ENCODE measurements at regions of chr6 and their contacts with region 1.

Region 1: GRCh38 chr6:109304284-109305015 is 77.8 kb downstream of the CD164 start:
- DNase-seq: peak; percentile 81 to 96 (median 86)
- ATAC-seq: peak; percentile 86
- H3K4me3 ChIP-seq: no peak overlapping the region
- H3K27ac ChIP-seq: peak overlapping the region; percentile 90
- H3K4me1 ChIP-seq: peaks cover 50 to 90% of the 10 kb centered on the region in 2 experiments
- H3K27me3 ChIP-seq: no peaks in the 10 kb centered on the region
- CTCF ChIP-seq: 0 out of 6 replicates have a peak, but pooled peaks of 1 of the 3 experiments have one; percentile 9
- EP300 ChIP-seq: peak; percentile 100
- POLR2A ChIP-seq: peak; percentile 43; the same call in 1 of the 2 replicates
- RAD21 ChIP-seq: peak; percentile 36 to 56; a peak in 3 of 4 replicates

Region 2: DNA sequence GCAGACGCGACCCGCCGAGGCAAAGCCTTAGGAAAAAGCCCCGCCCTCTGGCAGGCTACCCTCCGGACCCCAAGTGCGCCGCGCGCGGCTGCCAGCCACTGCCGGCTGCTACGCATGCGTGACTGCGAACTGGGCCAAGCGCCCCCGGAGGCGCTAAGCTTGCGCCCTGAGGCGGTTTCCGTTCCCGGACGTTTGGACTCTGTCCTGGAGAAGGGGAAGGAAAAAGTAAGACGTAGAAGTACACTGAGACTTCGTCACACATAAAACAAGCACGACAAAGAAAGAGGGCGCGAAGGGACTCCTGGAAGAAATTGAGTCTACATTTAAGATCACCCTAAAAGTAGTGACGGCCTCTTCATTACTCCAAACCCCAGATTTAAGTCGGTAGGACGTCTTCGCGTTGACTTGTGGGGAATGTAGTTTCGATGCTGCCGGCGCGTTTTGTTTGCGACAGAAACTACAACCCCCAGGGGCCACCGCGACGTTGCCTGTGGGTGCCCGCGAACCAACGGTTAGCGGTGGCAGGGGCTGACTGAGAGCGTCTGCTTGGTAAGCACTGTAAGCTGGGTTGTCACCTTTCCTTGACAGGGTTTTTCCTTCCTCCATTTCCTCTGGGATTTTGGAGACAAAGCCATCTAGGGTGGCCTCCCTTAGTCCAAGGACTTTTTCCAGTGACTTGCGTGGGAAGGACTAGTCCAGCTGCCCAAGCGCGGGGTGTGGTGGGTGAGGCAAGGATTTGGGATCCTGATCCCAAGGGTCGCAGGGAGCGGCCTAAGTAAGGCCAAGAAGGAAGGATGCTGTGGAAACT is 209.2 kb before region 1 on chr6 and contains the start of gene CEP57L1:
- CTCF ChIA-PET with region 1: no interaction called
- POLR2A ChIA-PET with region 1: no interaction called
- in situ Hi-C with region 1: no loop called
- intact Hi-C with region 1: loop called (anchors 5 kb)
- DNase-seq: peak; percentile 73 to 98 (median 94)
- ATAC-seq: peak; percentile 85
- H3K4me3 ChIP-seq: peak within 1 kb of the TSS; percentile 84
- H3K27ac ChIP-seq: peak within 1 kb of the TSS; percentile 94
- H3K4me1 ChIP-seq: peaks cover 0 to 10% of the 10 kb centered on the region in 2 experiments; a peak in 2 of 5 replicates
- H3K27me3 ChIP-seq: no peaks in the 10 kb centered on the region
- CTCF ChIP-seq: peak; percentile 31 to 46 (median 38); a peak in 5 of 6 replicates
- EP300 ChIP-seq: no peak; the same call in none of the 2 replicates
- POLR2A ChIP-seq: peak; percentile 80
- RAD21 ChIP-seq: no peak
- polyA plus RNA-seq, gene CEP57L1: 70.0 to 88.6 TPM

Region 3: GRCh38 chr6:109236115-109237076 is 68.1 kb before region 1 on chr6:
- CTCF ChIA-PET with region 1: no interaction called
- POLR2A ChIA-PET with region 1: interaction called, 3 read pairs
- in situ Hi-C with region 1: no loop called
- intact Hi-C with region 1: loop called (anchors 1 kb)
- DNase-seq: peak; percentile 43 to 92 (median 60)
- ATAC-seq: peak; percentile 94
- H3K4me3 ChIP-seq: 0 out of 2 replicates have a peak overlapping the region, but pooled peaks have one; percentile 1
- H3K27ac ChIP-seq: peak overlapping the region; percentile 93
- H3K4me1 ChIP-seq: peaks cover 19 to 57% of the 10 kb centered on the region in 2 experiments
- H3K27me3 ChIP-seq: no peaks in the 10 kb centered on the region
- CTCF ChIP-seq: peak; percentile 65 to 76 (median 73)
- EP300 ChIP-seq: peak; percentile 23; the same call in 1 of the 2 replicates
- POLR2A ChIP-seq: no peak
- RAD21 ChIP-seq: peak; percentile 75 to 92

Region 4: DNA sequence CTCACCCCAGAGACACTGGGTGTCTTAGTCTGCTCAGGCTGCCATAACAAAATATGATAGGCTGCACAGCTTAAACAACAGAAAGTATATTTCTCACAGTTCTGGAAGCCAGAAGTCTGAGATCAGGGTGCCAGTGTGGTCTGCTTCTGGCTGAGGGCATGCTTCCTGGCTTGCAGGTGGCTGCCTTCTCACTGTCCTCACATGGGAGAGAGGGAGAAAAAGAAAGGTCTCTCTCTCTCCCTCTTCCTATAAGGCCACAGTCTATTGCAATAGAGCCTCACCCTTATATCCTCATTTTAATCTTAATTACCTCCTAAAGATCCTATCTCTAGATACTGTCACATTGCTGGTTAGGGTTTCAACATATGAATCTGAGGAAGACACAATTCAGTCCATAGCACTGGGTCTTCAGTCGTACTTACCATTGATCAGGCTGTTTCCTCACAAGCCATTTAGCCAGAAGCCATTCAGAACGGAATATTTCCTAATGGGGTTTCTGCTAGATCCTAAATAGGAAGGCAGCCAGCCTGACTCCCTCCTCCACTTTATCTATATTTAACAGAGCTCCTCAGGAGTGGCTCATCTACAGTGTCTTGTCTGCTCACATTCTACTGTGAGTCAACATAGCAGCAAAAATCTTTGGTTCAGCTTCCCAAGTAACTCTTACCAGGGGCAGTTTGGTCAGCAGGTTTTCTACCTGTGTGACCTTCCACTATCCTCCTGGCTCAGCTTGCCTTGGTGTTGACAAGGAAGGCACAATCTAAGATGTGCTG is 35.6 kb after region 1 on chr6:
- CTCF ChIA-PET with region 1: no interaction called
- POLR2A ChIA-PET with region 1: interaction called, 3 read pairs
- in situ Hi-C with region 1: no loop called
- intact Hi-C with region 1: loop called (anchors 2 kb)
- DNase-seq: peak; percentile 41 to 80 (median 60)
- ATAC-seq: peak; percentile 81
- H3K4me3 ChIP-seq: no peak overlapping the region
- H3K27ac ChIP-seq: peak overlapping the region; percentile 30; the same call in 1 of the 3 replicates
- H3K4me1 ChIP-seq: peaks cover 27 to 43% of the 10 kb centered on the region in 2 experiments
- H3K27me3 ChIP-seq: no peaks in the 10 kb centered on the region
- CTCF ChIP-seq: no peak
- EP300 ChIP-seq: peak; percentile 71
- POLR2A ChIP-seq: no peak
- RAD21 ChIP-seq: no peak

Region 5: GRCh38 chr6:109349419-109350078 is 45.1 kb after region 1 on chr6:
- CTCF ChIA-PET with region 1: no interaction called
- POLR2A ChIA-PET with region 1: interaction called, 5 read pairs
- in situ Hi-C with region 1: no loop called
- intact Hi-C with region 1: loop called (anchors 2 kb)
- DNase-seq: peak in 3 of 4 experiments; percentile 19 to 91 (median 83)
- ATAC-seq: peak; percentile 87
- H3K4me3 ChIP-seq: no peak overlapping the region
- H3K27ac ChIP-seq: peak overlapping the region; percentile 88
- H3K4me1 ChIP-seq: peaks cover 26 to 45% of the 10 kb centered on the region in 2 experiments
- H3K27me3 ChIP-seq: no peaks in the 10 kb centered on the region
- CTCF ChIP-seq: no peak
- EP300 ChIP-seq: peak; percentile 81
- POLR2A ChIP-seq: no peak
- RAD21 ChIP-seq: peak in 1 of 2 experiments; percentile 23; a peak in 2 of 4 replicates

Region 6: GRCh38 chr6:109382576-109383437 is 78.4 kb after region 1 on chr6:
- CTCF ChIA-PET with region 1: no interaction called
- POLR2A ChIA-PET with region 1: interaction called, 4 read pairs
- in situ Hi-C with region 1: no loop called
- intact Hi-C with region 1: loop called (anchors 2 kb)
- DNase-seq: peak; percentile 86 to 96 (median 91)
- ATAC-seq: peak; percentile 80
- H3K4me3 ChIP-seq: peak overlapping the region; percentile 83
- H3K27ac ChIP-seq: peak overlapping the region; percentile 99
- H3K4me1 ChIP-seq: peaks cover 4 to 26% of the 10 kb centered on the region in 2 experiments; a peak in 4 of 5 replicates
- H3K27me3 ChIP-seq: no peaks in the 10 kb centered on the region
- CTCF ChIP-seq: peak; percentile 56 to 83 (median 62)
- EP300 ChIP-seq: no peak; the same call in 1 of the 2 replicates
- POLR2A ChIP-seq: peak; percentile 59
- RAD21 ChIP-seq: peak; percentile 77 to 80

Region 7: GRCh38 chr6:109440331-109441068 is 136.1 kb after region 1 on chr6 and contains the starts of genes PPIL6 and SMPD2:
- CTCF ChIA-PET with region 1: no interaction called
- POLR2A ChIA-PET with region 1: no interaction called
- in situ Hi-C with region 1: no loop called
- intact Hi-C with region 1: loop called (anchors 2 kb)
- DNase-seq: peak; percentile 92 to 95 (median 94)
- ATAC-seq: peak; percentile 90
- H3K4me3 ChIP-seq: peak within 1 kb of the TSS; percentile 86
- H3K27ac ChIP-seq: peak within 1 kb of the TSS; percentile 74
- H3K4me1 ChIP-seq: peaks cover 13 to 27% of the 10 kb centered on the region in 2 experiments; a peak in 4 of 5 replicates
- H3K27me3 ChIP-seq: no peaks in the 10 kb centered on the region
- CTCF ChIP-seq: peak in 2 of 3 experiments; percentile 45 to 47; a peak in 4 of 6 replicates
- EP300 ChIP-seq: 0 out of 2 replicates have a peak, but pooled peaks have one; percentile 19
- POLR2A ChIP-seq: peak; percentile 75
- RAD21 ChIP-seq: no peak
- polyA plus RNA-seq, gene PPIL6: 0.13 to 0.14 TPM
- polyA plus RNA-seq, gene SMPD2: 0.13 to 1.2 TPM